ENCODE measurements at regions of chr1 and their contacts with region 1.

Region 1: DNA sequence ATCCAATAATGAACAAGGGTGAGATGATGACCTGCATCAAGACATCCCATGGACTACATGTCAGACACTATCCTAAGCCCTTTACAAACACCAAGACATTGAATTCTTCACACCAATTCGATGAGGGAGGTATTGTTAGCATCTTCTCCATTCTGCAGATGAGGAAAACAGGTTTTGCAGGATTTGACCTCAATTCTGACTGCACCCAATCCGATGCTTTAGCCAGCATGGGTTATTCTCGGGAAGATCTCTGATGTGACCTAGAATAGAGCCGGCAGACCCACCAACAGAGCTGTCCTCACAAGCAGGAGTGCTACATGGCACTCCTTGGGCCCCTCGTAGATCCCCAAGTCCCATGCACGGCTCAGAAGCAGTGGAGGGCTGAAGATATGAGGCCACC is 16.9 kb upstream of the ZC3H12A start:
- DNase-seq: no peak
- ATAC-seq: no peak
- H3K4me3 ChIP-seq: no peak overlapping the region
- H3K27ac ChIP-seq: no peak overlapping the region
- H3K4me1 ChIP-seq: peaks cover 10% of the 10 kb centered on the region
- H3K27me3 ChIP-seq: no peaks in the 10 kb centered on the region
- CTCF ChIP-seq: no peak

Region 2: DNA sequence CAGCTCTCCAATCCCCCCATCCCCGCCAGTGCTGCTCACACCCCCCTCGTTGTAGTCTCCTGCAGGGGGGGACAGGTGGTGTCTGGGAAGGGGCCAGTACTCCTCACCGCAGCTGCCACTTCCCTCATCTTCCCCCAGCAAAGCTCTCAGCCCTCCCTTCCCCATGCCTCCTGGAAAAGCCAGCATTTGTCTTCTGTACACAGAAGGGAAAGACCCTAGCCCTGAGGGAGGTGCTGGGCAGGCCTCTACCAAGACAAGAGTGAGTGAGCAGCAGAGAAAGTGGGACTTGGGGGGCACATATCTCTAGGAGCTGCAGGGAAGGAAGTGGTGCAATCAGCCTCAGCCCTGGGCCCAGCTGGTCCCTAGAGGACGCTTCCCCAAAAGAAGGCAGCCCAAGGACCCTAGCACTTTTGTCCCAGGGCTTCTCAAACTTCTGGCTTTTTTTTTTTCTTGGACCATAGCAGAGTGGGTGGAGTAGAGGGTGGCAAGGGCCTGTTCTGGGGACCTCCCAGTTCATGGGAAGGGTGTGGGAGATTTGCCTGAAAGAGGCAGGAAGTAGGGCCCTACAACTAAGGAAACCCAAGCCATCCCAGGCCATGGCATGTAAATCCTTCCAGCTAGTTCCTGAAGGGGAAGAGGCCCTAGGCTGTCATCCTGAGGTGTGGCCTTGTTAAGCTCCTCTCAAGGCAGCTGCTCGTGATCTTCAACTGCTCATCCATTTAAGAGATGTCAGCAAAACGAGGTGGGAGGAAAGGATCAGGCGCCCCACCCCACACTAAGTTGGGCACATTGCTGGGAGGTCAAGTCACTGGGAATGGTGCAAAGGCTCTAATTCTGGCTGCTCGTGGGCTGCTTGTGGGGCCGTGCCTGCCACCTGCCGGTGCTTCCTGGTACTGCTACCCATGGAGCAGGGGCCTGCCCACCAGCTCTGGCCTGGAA is 29.5 kb after region 1 on chr1:
- intact Hi-C with region 1: loop called (anchors 2 kb)
- DNase-seq: peak; percentile 90
- ATAC-seq: peak; percentile 89
- H3K4me3 ChIP-seq: no peak overlapping the region
- H3K27ac ChIP-seq: peak overlapping the region; percentile 76
- H3K4me1 ChIP-seq: peaks cover 42% of the 10 kb centered on the region
- H3K27me3 ChIP-seq: no peaks in the 10 kb centered on the region
- CTCF ChIP-seq: peak; percentile 99

Measured in upper lobe of right lung (tissue), 1 donor.